ENCODE measurements at regions of chr5 and their contacts with region 1.

Region 1: GRCh38 chr5:62779010-62779422 is 200.4 kb downstream of the LRRC70 start:
- DNase-seq: peak in 1 of 2 donors; percentile 60
- ATAC-seq: peak in 1 of 3 donors; percentile 66
- H3K4me3 ChIP-seq: no peak overlapping the region
- H3K4me3 Mint-ChIP-seq: no peak overlapping the region
- H3K27ac ChIP-seq: no peak overlapping the region
- H3K27ac Mint-ChIP-seq: no peak overlapping the region
- H3K4me1 ChIP-seq: peaks cover 3% of the 10 kb centered on the region
- H3K4me1 Mint-ChIP-seq: no peaks in the 10 kb centered on the region
- H3K27me3 ChIP-seq: no peaks in the 10 kb centered on the region
- H3K27me3 Mint-ChIP-seq: no peaks in the 10 kb centered on the region
- CTCF ChIP-seq: peak; percentile 83

Region 2: GRCh38 chr5:62448528-62448927 is 330.5 kb before region 1 on chr5:
- intact Hi-C with region 1: loop called (anchors 1 kb)
- DNase-seq: no peak
- ATAC-seq: no peak
- H3K4me3 ChIP-seq: no peak overlapping the region
- H3K4me3 Mint-ChIP-seq: no peak overlapping the region
- H3K27ac ChIP-seq: no peak overlapping the region
- H3K27ac Mint-ChIP-seq: no peak overlapping the region
- H3K4me1 ChIP-seq: no peaks in the 10 kb centered on the region
- H3K4me1 Mint-ChIP-seq: no peaks in the 10 kb centered on the region
- H3K27me3 ChIP-seq: no peaks in the 10 kb centered on the region
- H3K27me3 Mint-ChIP-seq: no peaks in the 10 kb centered on the region
- CTCF ChIP-seq: no peak

Measured in natural killer cell (primary cell).